ENCODE measurements at regions of chr16 and their contacts with region 1.

Region 1: GRCh38 chr16:81035398-81035974 is at the start of gene ATMIN:
- DNase-seq: peak; percentile 88
- H3K4me3 Mint-ChIP-seq: peak within 1 kb of the TSS; percentile 79
- H3K27ac Mint-ChIP-seq: peak within 1 kb of the TSS; percentile 59
- H3K4me1 Mint-ChIP-seq: peaks cover 14% of the 10 kb centered on the region
- H3K27me3 Mint-ChIP-seq: no peaks in the 10 kb centered on the region
- CTCF ChIP-seq: peak; percentile 95
- total RNA-seq, gene ATMIN: 33.8 and 39.1 TPM in 2 replicates

Region 2: GRCh38 chr16:81001330-81001729 is 34.2 kb before region 1 on chr16:
- CTCF ChIA-PET with region 1: interaction called, 67 read pairs
- POLR2A ChIA-PET with region 1: interaction called, 59 read pairs
- intact Hi-C with region 1: no loop called
- DNase-seq: no peak
- H3K4me3 Mint-ChIP-seq: no peak overlapping the region
- H3K27ac Mint-ChIP-seq: no peak overlapping the region
- H3K4me1 Mint-ChIP-seq: peaks cover 27% of the 10 kb centered on the region
- H3K27me3 Mint-ChIP-seq: no peaks in the 10 kb centered on the region
- CTCF ChIP-seq: no peak

Region 3: GRCh38 chr16:81006814-81007696 is 28.4 kb before region 1 on chr16 and contains the starts of genes CENPN and CMC2:
- CTCF ChIA-PET with region 1: interaction called, 67 read pairs
- POLR2A ChIA-PET with region 1: interaction called, 59 read pairs
- intact Hi-C with region 1: no loop called
- DNase-seq: peak; percentile 98
- H3K4me3 Mint-ChIP-seq: peak within 1 kb of the TSS; percentile 99
- H3K27ac Mint-ChIP-seq: peak within 1 kb of the TSS; percentile 99
- H3K4me1 Mint-ChIP-seq: peaks cover 38% of the 10 kb centered on the region
- H3K27me3 Mint-ChIP-seq: no peaks in the 10 kb centered on the region
- CTCF ChIP-seq: no peak
- total RNA-seq, gene CENPN: 29.5 and 38.4 TPM in 2 replicates
- total RNA-seq, gene CMC2: 83.0 and 102 TPM in 2 replicates

Region 4: GRCh38 chr16:81018496-81018895 is 17.0 kb before region 1 on chr16:
- CTCF ChIA-PET with region 1: interaction called, 15 read pairs
- POLR2A ChIA-PET with region 1: interaction called, 7 read pairs
- intact Hi-C with region 1: no loop called
- DNase-seq: no peak
- H3K4me3 Mint-ChIP-seq: no peak overlapping the region
- H3K27ac Mint-ChIP-seq: no peak overlapping the region
- H3K4me1 Mint-ChIP-seq: no peaks in the 10 kb centered on the region
- H3K27me3 Mint-ChIP-seq: no peaks in the 10 kb centered on the region
- CTCF ChIP-seq: no peak

Region 5: GRCh38 chr16:81077076-81077940 is 41.8 kb after region 1 on chr16 and contains the start of gene C16orf46:
- CTCF ChIA-PET with region 1: interaction called, 20 read pairs
- POLR2A ChIA-PET with region 1: interaction called, 41 read pairs
- intact Hi-C with region 1: loop called (anchors 2 kb)
- DNase-seq: peak; percentile 92
- H3K4me3 Mint-ChIP-seq: no peak within 1 kb of the TSS
- H3K27ac Mint-ChIP-seq: no peak within 1 kb of the TSS
- H3K4me1 Mint-ChIP-seq: no peaks in the 10 kb centered on the region
- H3K27me3 Mint-ChIP-seq: no peaks in the 10 kb centered on the region
- CTCF ChIP-seq: no peak
- total RNA-seq, gene C16orf46: 0.66 and 3.8 TPM in 2 replicates

Region 6: GRCh38 chr16:81198635-81199034 is 163.1 kb after region 1 on chr16:
- CTCF ChIA-PET with region 1: interaction called, 3 read pairs
- POLR2A ChIA-PET with region 1: no interaction called
- intact Hi-C with region 1: loop called (anchors 10 kb)
- DNase-seq: no peak
- H3K4me3 Mint-ChIP-seq: no peak overlapping the region
- H3K27ac Mint-ChIP-seq: no peak overlapping the region
- H3K4me1 Mint-ChIP-seq: no peaks in the 10 kb centered on the region
- H3K27me3 Mint-ChIP-seq: peaks cover 33% of the 10 kb centered on the region
- CTCF ChIP-seq: peak; percentile 12

Region 7: GRCh38 chr16:81314603-81315270 is 279.3 kb after region 1 on chr16 and contains the start of gene GAN:
- CTCF ChIA-PET with region 1: interaction called, 5 read pairs
- POLR2A ChIA-PET with region 1: interaction called, 5 read pairs
- intact Hi-C with region 1: loop called (anchors 10 kb)
- DNase-seq: peak; percentile 95
- H3K4me3 Mint-ChIP-seq: peak within 1 kb of the TSS; percentile 93
- H3K27ac Mint-ChIP-seq: peak within 1 kb of the TSS; percentile 74
- H3K4me1 Mint-ChIP-seq: peaks cover 22% of the 10 kb centered on the region
- H3K27me3 Mint-ChIP-seq: no peaks in the 10 kb centered on the region
- CTCF ChIP-seq: no peak
- total RNA-seq, gene GAN: 12.4 and 17.2 TPM in 2 replicates

Measured in MCF 10A (cell line).